ENCODE measurements at regions of chr15 and their contacts with region 1.

Region 1: GRCh38 chr15:92294759-92295158 is 98.9 kb upstream of the ST8SIA2 start:
- DNase-seq: no peak
- ATAC-seq: no peak
- H3K4me3 ChIP-seq: no peak overlapping the region
- H3K27ac ChIP-seq: no peak overlapping the region
- H3K4me1 ChIP-seq: peaks cover 0 to 18% (median 0%) of the 10 kb centered on the region in 9 donors
- H3K27me3 ChIP-seq: peaks cover 0 to 6% (median 0%) of the 10 kb centered on the region in 7 donors
- CTCF ChIP-seq: no peak

Region 2: DNA sequence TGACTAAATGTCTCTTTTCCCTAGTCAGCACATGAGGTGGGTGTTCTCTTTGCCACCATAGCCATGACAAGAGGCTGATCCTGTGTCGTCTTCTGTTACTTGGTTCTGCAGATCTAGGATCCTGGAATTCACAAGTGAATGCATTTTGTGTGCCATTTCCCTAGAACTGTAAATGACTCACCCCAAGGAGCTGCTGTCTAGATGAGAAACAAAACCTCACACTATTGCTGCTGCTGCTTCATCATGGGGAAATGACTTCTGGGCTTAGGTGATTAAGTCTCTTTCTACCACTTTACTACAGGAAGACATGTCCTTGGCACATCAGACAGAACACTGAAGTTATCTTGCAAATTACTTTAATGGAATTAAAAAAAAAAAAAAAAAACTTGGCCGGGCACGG is 386.4 kb before region 1 on chr15:
- intact Hi-C with region 1: no loop called
- DNase-seq: no peak
- ATAC-seq: no peak
- H3K4me3 ChIP-seq: no peak overlapping the region
- H3K27ac ChIP-seq: no peak overlapping the region
- H3K4me1 ChIP-seq: peaks cover 1 to 39% (median 17%) of the 10 kb centered on the region in 9 donors
- H3K27me3 ChIP-seq: no peaks in the 10 kb centered on the region
- CTCF ChIP-seq: no peak

Region 3: DNA sequence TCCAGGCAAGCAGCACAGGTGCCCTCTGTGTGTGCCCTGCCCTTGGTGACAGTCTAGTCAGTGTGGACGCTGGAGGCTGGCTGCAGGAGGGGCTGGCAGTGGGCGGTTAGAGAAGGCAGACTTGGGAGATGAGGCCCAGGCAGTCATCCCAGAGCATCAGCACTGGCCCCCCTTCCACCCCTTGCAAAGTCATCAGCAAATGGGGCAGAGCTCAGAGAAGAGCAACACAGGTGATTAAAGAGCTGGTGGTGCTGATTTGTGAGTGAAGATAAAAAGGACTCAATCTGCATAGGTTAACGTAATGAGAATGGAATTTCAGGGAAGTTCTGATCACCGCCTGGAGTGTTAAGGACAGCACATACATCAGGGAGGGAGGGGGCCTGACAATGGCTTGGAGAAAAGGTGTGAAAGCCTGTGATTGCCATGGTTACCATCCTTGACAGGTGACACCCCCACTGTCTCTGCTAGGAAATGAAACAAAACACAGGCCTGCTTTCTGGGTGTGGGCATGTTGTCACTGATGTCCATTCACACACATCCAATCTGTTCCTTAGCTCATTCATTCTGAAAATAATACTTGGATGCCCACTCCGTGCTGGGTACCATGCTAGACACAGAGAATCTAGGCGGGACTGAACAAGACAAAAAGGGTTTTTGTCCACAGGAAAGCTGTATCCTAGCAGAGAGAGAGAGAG is 170.7 kb before region 1 on chr15:
- intact Hi-C with region 1: no loop called
- DNase-seq: no peak
- ATAC-seq: peak in 4 of 8 donors; percentile 17 to 51 (median 30)
- H3K4me3 ChIP-seq: no peak overlapping the region
- H3K27ac ChIP-seq: peak overlapping the region in 1 of 10 donors; percentile 10
- H3K4me1 ChIP-seq: peaks cover 0 to 28% (median 6%) of the 10 kb centered on the region in 9 donors
- H3K27me3 ChIP-seq: no peaks in the 10 kb centered on the region
- CTCF ChIP-seq: no peak

Region 4: DNA sequence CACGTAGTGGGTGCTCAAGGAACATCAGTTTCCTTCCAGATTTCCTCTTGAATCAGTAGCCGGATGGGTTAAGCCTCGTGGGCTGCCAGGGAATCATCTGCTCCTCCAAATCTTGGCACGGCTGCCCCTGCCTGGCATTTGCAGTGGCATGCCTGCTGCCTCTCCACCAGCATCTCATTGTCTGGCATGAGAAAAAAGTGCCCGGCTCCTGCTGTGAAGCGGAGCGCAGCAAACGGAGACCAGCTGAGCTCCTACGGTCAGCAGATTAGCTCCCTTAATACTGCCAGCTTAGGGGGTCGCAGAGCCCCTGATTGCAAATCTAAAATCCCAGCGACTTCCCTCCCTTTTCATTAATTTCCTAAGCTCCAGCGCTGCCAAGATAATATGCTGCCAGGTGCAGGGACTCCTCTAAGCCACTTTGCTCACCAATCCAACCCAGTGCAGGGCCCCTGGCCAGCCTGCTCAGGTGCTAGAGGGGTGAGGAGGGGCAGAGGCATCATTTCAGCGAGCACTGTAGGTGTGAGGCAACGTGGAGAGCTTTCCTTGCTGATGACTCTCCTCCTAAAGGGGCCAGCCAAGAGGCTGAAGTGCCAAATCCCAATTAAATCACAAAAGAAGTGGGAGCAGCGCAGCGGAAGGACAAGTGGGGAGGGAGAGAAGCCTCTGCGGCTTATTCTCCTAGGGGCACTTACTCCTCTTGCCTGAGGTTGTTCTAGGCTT is 49.3 kb after region 1 on chr15:
- intact Hi-C with region 1: loop called in 1 of 10 experiments (anchors 5 kb)
- DNase-seq: peak; percentile 65 to 68
- ATAC-seq: peak; percentile 63 to 94 (median 82)
- H3K4me3 ChIP-seq: no peak overlapping the region
- H3K27ac ChIP-seq: peak overlapping the region in 3 of 10 donors; percentile 34 to 66 (median 57)
- H3K4me1 ChIP-seq: peaks cover 0 to 23% (median 7%) of the 10 kb centered on the region in 9 donors
- H3K27me3 ChIP-seq: peaks cover 0 to 22% (median 14%) of the 10 kb centered on the region in 7 donors
- CTCF ChIP-seq: no peak

Measured in heart right ventricle (tissue), 16 donors.